ENCODE measurements at regions of chr11 and their contacts with region 1.

Region 1: GRCh38 chr11:2151500-2152257 is 9.3 kb downstream of the INS start:
- DNase-seq: peak; percentile 74
- H3K4me3 ChIP-seq: no peak overlapping the region
- H3K27ac ChIP-seq: no peak overlapping the region
- H3K4me1 ChIP-seq: no peaks in the 10 kb centered on the region
- H3K27me3 ChIP-seq: peaks cover 13 to 16% of the 10 kb centered on the region in 2 experiments
- CTCF ChIP-seq: peak; percentile 59 to 73
- POLR2A ChIP-seq: no peak

Region 2: GRCh38 chr11:1832211-1832919 is 319.3 kb before region 1 on chr11:
- CTCF ChIA-PET with region 1: interaction called, 41 read pairs
- POLR2A ChIA-PET with region 1: no interaction called
- dilution Hi-C with region 1: no loop called
- intact Hi-C with region 1: loop called (anchors 1 kb)
- DNase-seq: no peak
- H3K4me3 ChIP-seq: no peak overlapping the region
- H3K27ac ChIP-seq: no peak overlapping the region
- H3K4me1 ChIP-seq: peaks cover 2% of the 10 kb centered on the region
- H3K27me3 ChIP-seq: no peaks in the 10 kb centered on the region
- CTCF ChIP-seq: peak; percentile 87 to 97
- POLR2A ChIP-seq: no peak

Region 3: GRCh38 chr11:1882519-1883238 is 269.0 kb before region 1 on chr11:
- CTCF ChIA-PET with region 1: interaction called, 262 read pairs
- POLR2A ChIA-PET with region 1: no interaction called
- dilution Hi-C with region 1: no loop called
- intact Hi-C with region 1: loop called (anchors 1 kb)
- DNase-seq: peak; percentile 60
- H3K4me3 ChIP-seq: no peak overlapping the region
- H3K27ac ChIP-seq: no peak overlapping the region
- H3K4me1 ChIP-seq: no peaks in the 10 kb centered on the region
- H3K27me3 ChIP-seq: no peaks in the 10 kb centered on the region
- CTCF ChIP-seq: peak; percentile 91 to 98
- POLR2A ChIP-seq: no peak

Region 4: DNA sequence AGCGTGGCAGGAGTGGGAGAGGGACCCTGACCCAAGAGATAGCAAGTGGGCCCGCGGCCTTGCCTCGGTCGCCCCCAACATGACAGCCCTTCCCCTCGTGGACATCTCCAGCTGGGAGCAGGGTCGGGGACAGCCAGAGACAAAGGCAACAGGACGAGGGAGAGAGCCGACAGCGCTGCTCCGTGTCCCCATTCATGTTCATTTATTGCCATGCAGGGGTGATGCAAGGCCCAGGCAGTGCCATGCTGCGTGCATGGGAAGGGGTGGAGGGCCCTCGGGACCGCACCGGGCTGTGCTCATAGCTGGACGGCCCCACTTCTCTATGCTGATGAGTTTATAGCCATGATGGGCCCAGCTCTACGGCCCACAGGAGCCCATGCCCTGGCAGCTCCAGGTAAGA is 191.9 kb before region 1 on chr11:
- CTCF ChIA-PET with region 1: interaction called, 26 read pairs
- POLR2A ChIA-PET with region 1: no interaction called
- dilution Hi-C with region 1: no loop called
- intact Hi-C with region 1: no loop called
- DNase-seq: no peak
- H3K4me3 ChIP-seq: no peak overlapping the region
- H3K27ac ChIP-seq: no peak overlapping the region
- H3K4me1 ChIP-seq: no peaks in the 10 kb centered on the region
- H3K27me3 ChIP-seq: no peaks in the 10 kb centered on the region
- CTCF ChIP-seq: no peak
- POLR2A ChIP-seq: no peak

Region 5: DNA sequence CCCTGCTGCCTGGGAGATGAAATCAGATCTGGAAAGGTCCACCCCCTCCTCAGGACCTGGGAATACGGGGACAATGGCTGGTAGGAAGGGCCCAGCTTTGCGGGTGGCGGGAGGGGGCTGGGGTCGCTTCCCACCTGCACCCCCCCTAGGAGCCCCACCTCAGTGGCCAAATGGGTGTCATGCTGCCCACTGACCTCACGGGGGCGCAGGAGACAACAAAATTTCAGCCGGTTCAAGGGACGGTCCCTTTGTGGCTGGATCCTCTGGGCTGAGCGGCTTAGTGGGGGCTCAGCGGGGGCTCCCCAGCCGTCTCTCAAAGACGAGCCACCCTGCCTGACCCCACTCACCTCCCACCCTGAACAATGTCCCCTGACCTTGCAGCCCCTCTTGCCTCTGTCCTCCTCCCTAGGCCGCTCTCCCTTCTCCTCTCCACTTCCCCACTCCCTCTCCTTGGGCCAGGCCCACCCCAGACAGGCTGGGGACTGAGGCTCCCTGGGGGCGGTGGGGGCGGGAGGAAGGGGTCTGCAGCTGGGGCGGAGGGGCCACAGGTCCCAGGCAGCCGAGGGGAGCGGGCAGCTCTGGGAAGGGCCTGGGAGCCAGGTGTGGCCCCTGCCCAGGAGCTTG is 114.7 kb before region 1 on chr11:
- CTCF ChIA-PET with region 1: interaction called, 868 read pairs
- POLR2A ChIA-PET with region 1: interaction called, 3 read pairs
- dilution Hi-C with region 1: no loop called
- intact Hi-C with region 1: no loop called
- DNase-seq: no peak
- H3K4me3 ChIP-seq: no peak overlapping the region
- H3K27ac ChIP-seq: no peak overlapping the region
- H3K4me1 ChIP-seq: no peaks in the 10 kb centered on the region
- H3K27me3 ChIP-seq: no peaks in the 10 kb centered on the region
- CTCF ChIP-seq: no peak
- POLR2A ChIP-seq: no peak

Region 6: DNA sequence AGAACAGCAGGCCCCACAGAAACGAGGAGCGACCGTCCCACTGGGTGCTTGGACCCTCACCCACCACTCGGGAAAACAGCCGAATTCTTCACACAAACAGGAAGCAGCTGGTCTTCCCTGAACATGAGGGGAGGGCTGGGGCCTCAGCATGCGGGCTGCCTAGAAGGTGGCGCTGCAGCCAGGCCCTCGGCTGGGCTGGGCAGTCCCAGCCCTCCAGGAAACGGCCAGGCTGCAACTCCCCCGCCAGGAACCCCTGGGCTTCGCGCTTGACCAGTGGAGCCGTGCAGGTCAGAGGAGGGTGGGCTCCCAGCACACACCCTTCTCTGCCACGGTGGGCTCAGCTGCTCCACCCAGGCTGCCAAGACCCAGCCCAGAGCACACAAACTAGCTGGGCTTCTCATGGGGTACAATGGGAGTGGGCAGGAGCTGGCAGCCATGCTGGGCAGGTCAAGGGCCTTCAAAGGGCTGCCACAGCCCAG is 42.1 kb before region 1 on chr11:
- CTCF ChIA-PET with region 1: interaction called, 20 read pairs
- POLR2A ChIA-PET with region 1: no interaction called
- dilution Hi-C with region 1: no loop called
- intact Hi-C with region 1: no loop called
- DNase-seq: peak; percentile 93
- H3K4me3 ChIP-seq: no peak overlapping the region
- H3K27ac ChIP-seq: peak overlapping the region; percentile 55
- H3K4me1 ChIP-seq: peaks cover 12% of the 10 kb centered on the region
- H3K27me3 ChIP-seq: no peaks in the 10 kb centered on the region
- CTCF ChIP-seq: peak; percentile 10 to 49
- POLR2A ChIP-seq: peak; percentile 24

Region 7: GRCh38 chr11:2534134-2534956 is 382.7 kb after region 1 on chr11:
- CTCF ChIA-PET with region 1: no interaction called
- POLR2A ChIA-PET with region 1: no interaction called
- dilution Hi-C with region 1: no loop called
- intact Hi-C with region 1: no loop called
- DNase-seq: no peak
- H3K4me3 ChIP-seq: no peak overlapping the region
- H3K27ac ChIP-seq: no peak overlapping the region
- H3K4me1 ChIP-seq: peaks cover 9% of the 10 kb centered on the region
- H3K27me3 ChIP-seq: no peaks in the 10 kb centered on the region
- CTCF ChIP-seq: no peak
- POLR2A ChIP-seq: no peak

Region 8: DNA sequence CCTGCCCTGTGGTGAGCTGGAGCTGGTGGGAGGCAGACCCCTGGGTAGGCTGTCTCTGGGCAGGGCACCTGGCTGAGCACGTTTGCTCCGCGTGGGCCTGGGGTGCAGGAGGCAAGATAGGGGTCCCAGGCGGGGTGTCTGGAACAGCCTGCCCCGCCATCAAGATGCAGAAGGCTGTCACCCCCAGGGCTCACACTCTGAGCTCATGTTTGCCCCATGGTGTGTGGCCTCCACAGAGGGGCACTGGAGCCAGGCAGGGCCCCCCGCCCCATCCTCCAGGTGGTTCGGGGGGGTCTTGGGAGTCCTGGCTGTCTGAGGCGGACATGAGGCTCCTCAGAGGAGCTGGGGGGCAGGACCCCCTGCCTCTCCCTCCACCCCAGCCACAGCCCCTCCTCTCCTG is 934.4 kb after region 1 on chr11:
- CTCF ChIA-PET with region 1: no interaction called
- POLR2A ChIA-PET with region 1: no interaction called
- dilution Hi-C with region 1: no loop called
- intact Hi-C with region 1: no loop called
- DNase-seq: no peak
- H3K4me3 ChIP-seq: no peak overlapping the region
- H3K27ac ChIP-seq: no peak overlapping the region
- H3K4me1 ChIP-seq: no peaks in the 10 kb centered on the region
- H3K27me3 ChIP-seq: no peaks in the 10 kb centered on the region
- CTCF ChIP-seq: no peak
- POLR2A ChIP-seq: no peak

Measured in endothelial cell of umbilical vein (primary cell).